ENCODE measurements at regions of chr2 and their contacts with region 1.

Region 1: GRCh38 chr2:105398699-105399432 is at the start of gene FHL2:
- DNase-seq: peak; percentile 37 to 85 (median 67)
- ATAC-seq: peak; percentile 97
- H3K4me3 ChIP-seq: peak within 1 kb of the TSS; percentile 69 to 88
- H3K4me3 Mint-ChIP-seq: peak within 1 kb of the TSS; percentile 85
- H3K27ac ChIP-seq: peak within 1 kb of the TSS in 1 of 2 experiments; percentile 17
- H3K27ac Mint-ChIP-seq: peak within 1 kb of the TSS; percentile 80
- H3K4me1 ChIP-seq: peaks cover 13% of the 10 kb centered on the region
- H3K4me1 Mint-ChIP-seq: peaks cover 12% of the 10 kb centered on the region
- H3K27me3 ChIP-seq: peaks cover 3 to 8% of the 10 kb centered on the region in 2 experiments
- H3K27me3 Mint-ChIP-seq: peaks cover 23% of the 10 kb centered on the region
- CTCF ChIP-seq: peak; percentile 48
- total RNA-seq, gene FHL2: 0.38 to 0.64 TPM

Region 2: GRCh38 chr2:104758199-104758620 is 640.7 kb before region 1 on chr2:
- CTCF ChIA-PET with region 1: no interaction called
- POLR2A ChIA-PET with region 1: no interaction called
- intact Hi-C with region 1: no loop called
- DNase-seq: no peak
- ATAC-seq: no peak
- H3K4me3 ChIP-seq: no peak overlapping the region
- H3K4me3 Mint-ChIP-seq: no peak overlapping the region
- H3K27ac ChIP-seq: no peak overlapping the region
- H3K27ac Mint-ChIP-seq: no peak overlapping the region
- H3K4me1 ChIP-seq: no peaks in the 10 kb centered on the region
- H3K4me1 Mint-ChIP-seq: no peaks in the 10 kb centered on the region
- H3K27me3 ChIP-seq: no peaks in the 10 kb centered on the region
- H3K27me3 Mint-ChIP-seq: peaks cover 5% of the 10 kb centered on the region
- CTCF ChIP-seq: no peak

Region 3: DNA sequence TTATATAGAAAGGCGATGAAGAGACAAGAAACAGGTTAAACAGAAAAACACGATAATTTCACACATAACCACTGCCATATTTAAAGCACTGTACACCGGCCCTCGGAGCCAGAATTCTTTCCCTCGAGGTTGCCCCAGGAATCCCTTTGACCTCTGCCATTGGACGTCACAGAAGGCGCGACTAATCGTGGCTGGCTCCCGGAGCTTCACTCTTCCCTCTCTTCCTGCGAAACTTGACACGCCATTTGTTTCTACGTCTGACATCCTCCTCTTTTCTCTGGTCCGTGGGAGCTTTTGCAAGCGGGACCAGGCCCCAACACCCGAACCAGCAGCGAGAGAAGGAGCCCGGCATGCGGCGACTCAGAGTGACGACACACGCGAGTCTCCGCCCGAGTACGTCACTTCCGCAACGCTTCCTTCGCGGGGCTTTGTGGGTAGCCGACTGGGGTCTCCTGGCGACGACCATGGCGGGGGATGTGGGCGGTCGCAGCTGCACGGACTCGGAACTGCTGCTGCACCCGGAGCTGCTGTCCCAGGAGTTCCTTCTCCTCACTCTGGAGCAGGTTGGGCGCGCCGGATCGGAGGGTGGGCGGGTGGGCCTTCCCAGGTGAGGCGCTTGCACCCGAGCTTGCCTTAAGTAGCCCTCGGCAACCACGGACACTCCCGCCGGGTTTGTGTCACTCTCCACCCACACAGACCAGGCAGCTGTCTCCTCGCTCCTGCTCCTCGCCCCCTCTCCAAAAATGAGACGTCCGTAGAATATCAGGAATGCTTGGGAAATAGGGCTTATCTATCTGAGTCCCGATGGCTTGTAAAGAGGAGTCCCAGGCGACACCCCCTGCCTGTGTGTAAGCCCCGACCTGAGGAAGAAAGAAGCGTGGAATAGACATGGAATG is 61.5 kb before region 1 on chr2 and contains the start of gene C2orf49:
- CTCF ChIA-PET with region 1: interaction called, 3 read pairs
- POLR2A ChIA-PET with region 1: no interaction called
- intact Hi-C with region 1: loop called in 1 of 2 experiments (anchors 5 kb)
- DNase-seq: peak; percentile 76 to 94 (median 90)
- ATAC-seq: peak; percentile 91
- H3K4me3 ChIP-seq: peak within 1 kb of the TSS; percentile 83 to 92
- H3K4me3 Mint-ChIP-seq: peak within 1 kb of the TSS; percentile 100
- H3K27ac ChIP-seq: peak within 1 kb of the TSS; percentile 96 to 98
- H3K27ac Mint-ChIP-seq: peak within 1 kb of the TSS; percentile 100
- H3K4me1 ChIP-seq: peaks cover 18% of the 10 kb centered on the region
- H3K4me1 Mint-ChIP-seq: peaks cover 32% of the 10 kb centered on the region
- H3K27me3 ChIP-seq: no peaks in the 10 kb centered on the region
- H3K27me3 Mint-ChIP-seq: no peaks in the 10 kb centered on the region
- CTCF ChIP-seq: no peak
- total RNA-seq, gene C2orf49: 27.8 to 28.9 TPM

Region 4: GRCh38 chr2:105357122-105357521 is 41.7 kb before region 1 on chr2:
- CTCF ChIA-PET with region 1: interaction called, 3 read pairs
- POLR2A ChIA-PET with region 1: no interaction called
- intact Hi-C with region 1: loop called in 1 of 2 experiments (anchors 1 kb)
- DNase-seq: no peak
- ATAC-seq: no peak
- H3K4me3 ChIP-seq: no peak overlapping the region
- H3K4me3 Mint-ChIP-seq: no peak overlapping the region
- H3K27ac ChIP-seq: no peak overlapping the region
- H3K27ac Mint-ChIP-seq: no peak overlapping the region
- H3K4me1 ChIP-seq: peaks cover 11% of the 10 kb centered on the region
- H3K4me1 Mint-ChIP-seq: peaks cover 16% of the 10 kb centered on the region
- H3K27me3 ChIP-seq: no peaks in the 10 kb centered on the region
- H3K27me3 Mint-ChIP-seq: no peaks in the 10 kb centered on the region
- CTCF ChIP-seq: no peak

Region 5: GRCh38 chr2:105468582-105469042 is 69.7 kb after region 1 on chr2:
- CTCF ChIA-PET with region 1: no interaction called
- POLR2A ChIA-PET with region 1: no interaction called
- intact Hi-C with region 1: no loop called
- DNase-seq: no peak
- ATAC-seq: no peak
- H3K4me3 ChIP-seq: no peak overlapping the region
- H3K4me3 Mint-ChIP-seq: peak overlapping the region; percentile 66
- H3K27ac ChIP-seq: no peak overlapping the region
- H3K27ac Mint-ChIP-seq: peak overlapping the region; percentile 68
- H3K4me1 ChIP-seq: peaks cover 17% of the 10 kb centered on the region
- H3K4me1 Mint-ChIP-seq: peaks cover 19% of the 10 kb centered on the region
- H3K27me3 ChIP-seq: no peaks in the 10 kb centered on the region
- H3K27me3 Mint-ChIP-seq: peaks cover 4% of the 10 kb centered on the region
- CTCF ChIP-seq: no peak

Measured in CD8-positive, alpha-beta T cell (primary cell).